ENCODE measurements at regions of chr12 and their contacts with region 1.

Region 1: GRCh38 chr12:47207340-47207717 is 127.6 kb upstream of the AMIGO2 start:
- DNase-seq: peak; percentile 71
- ATAC-seq: peak; percentile 54
- H3K4me3 Mint-ChIP-seq: peak overlapping the region; percentile 54
- H3K27ac Mint-ChIP-seq: peak overlapping the region; percentile 92
- H3K4me1 Mint-ChIP-seq: peaks cover 78% of the 10 kb centered on the region
- H3K27me3 Mint-ChIP-seq: no peaks in the 10 kb centered on the region

Region 2: DNA sequence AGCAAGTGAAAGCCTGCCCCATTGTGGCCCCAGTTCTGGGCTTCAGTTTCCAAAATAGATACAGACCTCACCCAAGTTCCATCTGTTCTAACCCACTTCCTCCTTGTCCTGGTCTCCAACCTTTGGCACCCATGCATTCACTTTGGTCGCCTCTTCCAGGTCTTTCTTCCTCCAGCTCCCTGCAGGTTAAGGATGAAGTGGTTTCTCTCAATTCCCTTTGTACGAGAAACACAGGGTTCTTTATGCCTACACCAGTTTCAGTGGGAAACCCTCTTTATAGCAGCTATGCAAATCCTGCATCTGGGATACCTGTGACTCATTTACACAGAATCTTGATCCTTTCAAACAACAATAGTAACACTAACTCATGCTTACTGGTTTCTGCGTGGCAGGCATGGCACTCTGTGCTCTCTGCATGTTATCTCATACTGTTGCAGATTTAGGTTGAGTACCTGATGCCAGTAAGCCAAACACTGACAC is 17.0 kb before region 1 on chr12:
- CTCF ChIA-PET with region 1: interaction called, 9 read pairs
- POLR2A ChIA-PET with region 1: interaction called, 5 read pairs
- intact Hi-C with region 1: loop called in 1 of 2 experiments (anchors 1 kb)
- DNase-seq: peak; percentile 57
- ATAC-seq: peak; percentile 84
- H3K4me3 Mint-ChIP-seq: peak overlapping the region; percentile 26
- H3K27ac Mint-ChIP-seq: peak overlapping the region; percentile 79
- H3K4me1 Mint-ChIP-seq: peaks cover 82% of the 10 kb centered on the region
- H3K27me3 Mint-ChIP-seq: no peaks in the 10 kb centered on the region

Region 3: GRCh38 chr12:47244835-47245234 is 37.5 kb after region 1 on chr12:
- CTCF ChIA-PET with region 1: no interaction called
- POLR2A ChIA-PET with region 1: no interaction called
- intact Hi-C with region 1: no loop called
- DNase-seq: no peak
- ATAC-seq: no peak
- H3K4me3 Mint-ChIP-seq: no peak overlapping the region
- H3K27ac Mint-ChIP-seq: no peak overlapping the region
- H3K4me1 Mint-ChIP-seq: no peaks in the 10 kb centered on the region
- H3K27me3 Mint-ChIP-seq: no peaks in the 10 kb centered on the region

Measured in activated CD4-positive, alpha-beta T cell treated with anti-CD3 and anti-CD28 coated beads for 36 hours (primary cell).